ENCODE measurements at regions of chr22 and their contacts with region 1.

Region 1: DNA sequence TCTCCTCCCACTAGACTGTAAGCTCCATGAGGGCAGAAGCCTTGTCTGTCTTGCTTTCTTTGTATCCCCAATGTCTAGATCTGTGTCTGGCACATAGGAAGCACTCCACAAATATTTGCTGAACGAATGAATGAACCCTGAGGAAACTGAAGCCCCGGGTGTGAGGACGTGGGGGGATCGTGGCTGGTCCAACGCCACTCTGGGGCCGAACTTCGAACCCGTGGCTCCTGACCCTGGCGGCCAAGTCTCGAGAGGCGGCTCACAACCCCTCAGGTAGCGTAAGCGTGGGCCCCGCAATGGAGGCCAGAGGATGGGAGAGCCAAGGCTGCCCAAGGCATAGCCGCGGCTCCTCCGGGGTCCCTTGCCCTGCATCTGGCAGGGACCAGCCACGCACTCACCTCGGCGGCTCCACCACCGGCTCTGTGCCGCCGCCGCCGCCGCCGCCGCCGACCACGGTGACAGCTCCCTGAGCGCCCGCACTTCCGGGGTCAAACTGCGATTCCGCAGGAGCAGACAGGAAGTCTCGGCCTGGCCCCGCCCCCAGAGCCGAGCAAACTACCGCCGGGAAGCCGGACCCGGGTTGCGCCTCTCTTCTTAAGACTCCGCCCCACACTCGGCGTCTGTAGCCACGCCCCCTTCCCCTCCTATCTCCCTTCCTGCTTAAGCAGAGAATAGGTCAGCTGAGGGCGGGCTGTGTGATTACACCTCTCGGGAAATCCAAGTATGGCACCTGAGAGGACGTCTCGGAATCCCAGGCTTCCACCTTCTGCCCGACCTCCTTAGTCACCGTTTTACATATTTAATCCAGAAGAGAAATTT is at the start of gene ASCC2:
- DNase-seq: peak; percentile 100
- H3K4me3 Mint-ChIP-seq: peak within 1 kb of the TSS; percentile 94
- H3K27ac Mint-ChIP-seq: peak within 1 kb of the TSS; percentile 92
- H3K4me1 Mint-ChIP-seq: peaks cover 34% of the 10 kb centered on the region
- H3K27me3 Mint-ChIP-seq: no peaks in the 10 kb centered on the region
- total RNA-seq, gene ASCC2: 57.6 to 60.4 TPM

Region 2: GRCh38 chr22:29387921-29388758 is 449.8 kb before region 1 on chr22 and contains the start of gene AP1B1:
- CTCF ChIA-PET with region 1: no interaction called
- intact Hi-C with region 1: loop called (anchors 1 kb)
- DNase-seq: peak; percentile 97
- H3K4me3 Mint-ChIP-seq: peak within 1 kb of the TSS; percentile 90
- H3K27ac Mint-ChIP-seq: peak within 1 kb of the TSS; percentile 82
- H3K4me1 Mint-ChIP-seq: peaks cover 43% of the 10 kb centered on the region
- H3K27me3 Mint-ChIP-seq: no peaks in the 10 kb centered on the region
- total RNA-seq, gene AP1B1: 52.0 to 52.2 TPM

Region 3: DNA sequence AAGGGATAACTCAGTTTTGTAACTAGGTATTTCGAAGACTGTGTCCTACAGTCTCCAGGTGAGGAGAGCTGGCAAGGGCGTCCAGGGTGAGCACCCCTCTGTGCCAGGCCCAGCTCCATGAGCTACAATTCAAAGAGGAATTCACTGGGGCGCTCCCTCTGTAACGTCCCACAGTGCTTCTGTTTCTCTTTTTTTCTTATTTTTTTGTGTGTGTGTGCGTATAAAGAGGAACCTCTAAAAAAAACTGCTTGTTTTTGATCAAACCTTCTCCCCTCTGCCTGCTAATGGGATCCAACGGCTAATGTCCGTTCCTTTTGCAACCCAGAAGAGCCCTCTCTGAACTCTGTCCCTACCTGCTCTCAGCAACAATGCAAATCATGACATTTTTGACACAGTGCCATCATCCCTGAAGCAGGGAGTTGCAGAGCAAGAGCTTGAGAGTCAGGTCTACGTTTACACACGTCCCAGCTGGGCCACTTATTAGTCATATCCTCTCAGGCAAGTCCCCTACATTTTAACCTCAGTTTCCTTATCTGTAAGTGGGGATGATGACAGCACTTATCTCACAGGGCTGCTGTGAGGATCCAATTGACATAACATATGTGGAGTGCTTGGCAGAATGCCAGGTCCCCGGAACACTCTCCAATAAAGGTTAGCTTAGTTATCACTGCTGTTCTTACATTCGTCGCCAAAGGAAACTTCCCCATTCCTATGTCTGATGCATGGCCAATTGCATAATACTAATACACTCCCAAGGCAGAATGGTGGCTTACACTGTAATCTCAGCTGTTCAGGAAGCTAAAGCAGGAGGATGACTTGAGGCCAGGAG is 16.8 kb before region 1 on chr22:
- CTCF ChIA-PET with region 1: no interaction called
- intact Hi-C with region 1: loop called (anchors 1 kb)
- DNase-seq: peak; percentile 86
- H3K4me3 Mint-ChIP-seq: no peak overlapping the region
- H3K27ac Mint-ChIP-seq: peak overlapping the region; percentile 83
- H3K4me1 Mint-ChIP-seq: peaks cover 15% of the 10 kb centered on the region
- H3K27me3 Mint-ChIP-seq: no peaks in the 10 kb centered on the region

Region 4: DNA sequence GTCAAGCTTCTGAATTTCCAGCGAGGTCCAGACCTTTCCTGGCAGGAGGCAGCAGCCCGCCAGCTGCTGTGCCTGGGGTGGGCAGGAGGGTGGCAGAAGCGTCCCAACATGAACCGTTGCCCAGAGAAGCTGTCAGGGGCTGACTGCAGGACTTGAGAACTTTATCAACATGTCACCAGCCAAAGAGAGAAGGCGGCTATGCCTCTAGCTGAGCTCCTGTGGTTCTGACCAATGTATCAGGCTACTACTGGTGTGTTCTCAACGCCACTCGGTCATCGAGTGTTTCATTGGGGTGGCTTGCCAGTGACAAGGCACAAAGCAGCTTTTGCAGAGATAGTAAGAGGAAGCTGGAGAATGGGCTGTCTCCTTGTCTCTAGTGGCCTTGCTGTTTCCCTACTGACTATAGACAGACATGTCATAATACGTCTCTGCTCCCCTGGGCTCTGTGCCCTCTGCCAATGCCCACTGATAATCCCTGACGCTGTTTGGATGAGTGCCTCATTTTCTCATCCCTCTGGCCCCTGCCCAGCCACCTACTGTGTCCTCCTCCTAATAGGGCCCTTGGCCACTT is 17.7 kb after region 1 on chr22:
- CTCF ChIA-PET with region 1: no interaction called
- intact Hi-C with region 1: no loop called
- DNase-seq: no peak
- H3K4me3 Mint-ChIP-seq: no peak overlapping the region
- H3K27ac Mint-ChIP-seq: no peak overlapping the region
- H3K4me1 Mint-ChIP-seq: no peaks in the 10 kb centered on the region
- H3K27me3 Mint-ChIP-seq: no peaks in the 10 kb centered on the region

Region 5: DNA sequence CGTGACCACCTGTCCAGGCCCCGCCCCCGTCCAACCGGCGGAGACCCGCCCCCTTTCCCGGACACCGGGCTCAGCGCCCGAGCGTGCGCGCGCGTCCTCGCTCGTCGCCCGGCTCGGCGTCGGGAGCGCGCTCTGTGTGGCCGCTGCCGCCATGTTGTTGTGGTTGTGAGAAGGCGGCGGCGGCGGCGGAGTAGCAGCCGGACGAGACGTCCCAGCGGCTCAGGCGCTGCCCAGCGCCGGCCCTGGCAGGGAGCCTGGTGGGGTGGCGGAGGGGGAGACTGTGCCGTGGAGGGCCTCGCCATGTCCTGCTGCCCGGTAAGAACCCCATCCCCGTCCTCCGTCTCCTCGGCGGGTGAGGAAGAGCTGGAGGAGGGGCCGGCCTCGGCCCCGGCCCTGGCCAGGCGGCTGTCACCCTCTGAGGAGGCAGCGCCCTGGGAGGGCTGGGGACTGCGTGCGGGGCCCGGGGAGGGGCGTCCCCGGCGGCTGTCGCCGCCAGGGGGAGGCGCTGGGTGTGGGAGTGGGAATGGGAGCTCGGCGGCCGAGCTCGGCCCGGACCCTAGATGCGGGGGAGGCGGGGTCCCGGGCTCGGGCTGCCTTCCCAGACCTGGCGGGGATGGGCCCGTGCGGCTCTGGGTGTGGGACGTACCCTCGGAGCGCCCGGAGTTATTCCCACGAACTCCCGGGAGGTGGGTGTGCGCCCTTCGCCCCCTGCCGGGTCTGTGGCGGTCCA is 45.2 kb after region 1 on chr22 and contains the start of gene MTMR3:
- CTCF ChIA-PET with region 1: interaction called, 3 read pairs
- intact Hi-C with region 1: loop called (anchors 1 kb)
- DNase-seq: peak; percentile 95
- H3K4me3 Mint-ChIP-seq: peak within 1 kb of the TSS; percentile 89
- H3K27ac Mint-ChIP-seq: peak within 1 kb of the TSS; percentile 78
- H3K4me1 Mint-ChIP-seq: peaks cover 6% of the 10 kb centered on the region
- H3K27me3 Mint-ChIP-seq: no peaks in the 10 kb centered on the region
- total RNA-seq, gene MTMR3: 26.0 to 27.1 TPM

Measured in activated naive CD4-positive, alpha-beta T cell treated with anti-CD3 and anti-CD28 coated beads for 36 hours (primary cell).